Mammary epithelial cell (primary cell): ENCODE measurements at regions of chr1 and their contacts with region 1.

Region 1: DNA sequence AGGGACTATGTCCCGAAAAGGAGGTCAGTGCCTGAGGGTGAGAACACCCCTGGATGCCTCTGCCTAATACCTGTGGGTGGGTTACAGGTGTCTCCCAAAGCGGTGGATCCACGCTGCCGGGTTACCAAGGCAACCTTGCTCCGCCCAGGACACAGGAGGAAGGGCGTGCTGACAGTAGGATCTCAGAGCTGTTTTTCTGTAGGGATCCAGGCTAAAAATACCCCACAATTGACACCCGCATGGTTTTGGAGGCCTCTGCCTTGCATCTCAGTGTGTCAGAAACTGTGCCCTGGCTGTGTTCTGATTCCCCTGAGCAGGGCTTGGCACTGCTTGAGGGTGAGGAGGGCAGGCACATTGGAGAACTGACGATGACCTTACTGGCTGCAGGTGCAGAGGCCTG is 118.0 kb downstream of the IER5 start:
- DNase-seq: no peak
- H3K4me3 ChIP-seq: no peak overlapping the region
- H3K27ac ChIP-seq: no peak overlapping the region
- H3K4me1 ChIP-seq: no peaks in the 10 kb centered on the region
- H3K27me3 ChIP-seq: no peaks in the 10 kb centered on the region
- CTCF ChIP-seq: no peak

Region 2: DNA sequence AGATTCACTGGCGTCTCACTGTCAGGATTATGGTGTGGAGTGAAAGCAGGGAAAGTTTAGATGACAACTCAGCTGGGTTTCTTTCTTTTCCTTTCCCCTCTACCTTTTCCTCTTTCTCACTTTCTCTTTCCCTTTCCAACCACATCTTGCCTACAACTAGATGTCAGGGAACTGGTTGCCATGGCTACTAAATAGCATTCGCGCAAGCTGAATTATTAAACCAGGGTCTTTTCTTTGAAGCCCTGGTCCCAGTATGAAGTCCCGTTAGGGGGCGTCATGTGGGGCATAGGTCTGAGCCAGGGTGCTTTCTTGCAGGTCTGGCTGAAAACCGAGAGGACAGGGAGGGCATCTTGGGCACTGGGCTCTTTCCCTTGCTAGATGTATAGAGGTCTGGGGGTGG is 108.4 kb after region 1 on chr1:
- CTCF ChIA-PET with region 1: no interaction called
- dilution Hi-C with region 1: loop called (anchors 5 kb)
- in situ Hi-C with region 1: no loop called
- intact Hi-C with region 1: no loop called
- DNase-seq: no peak
- H3K4me3 ChIP-seq: no peak overlapping the region
- H3K27ac ChIP-seq: no peak overlapping the region
- H3K4me1 ChIP-seq: peaks cover 8% of the 10 kb centered on the region
- H3K27me3 ChIP-seq: peaks cover 38% of the 10 kb centered on the region
- CTCF ChIP-seq: no peak

Region 3: GRCh38 chr1:181732218-181732990 is 525.9 kb after region 1 on chr1:
- CTCF ChIA-PET with region 1: no interaction called
- dilution Hi-C with region 1: no loop called
- in situ Hi-C with region 1: no loop called
- intact Hi-C with region 1: no loop called
- DNase-seq: no peak
- H3K4me3 ChIP-seq: no peak overlapping the region
- H3K27ac ChIP-seq: no peak overlapping the region
- H3K4me1 ChIP-seq: no peaks in the 10 kb centered on the region
- H3K27me3 ChIP-seq: no peaks in the 10 kb centered on the region
- CTCF ChIP-seq: no peak